ENCODE measurements at regions of chr12 and their contacts with region 1.

Region 1: DNA sequence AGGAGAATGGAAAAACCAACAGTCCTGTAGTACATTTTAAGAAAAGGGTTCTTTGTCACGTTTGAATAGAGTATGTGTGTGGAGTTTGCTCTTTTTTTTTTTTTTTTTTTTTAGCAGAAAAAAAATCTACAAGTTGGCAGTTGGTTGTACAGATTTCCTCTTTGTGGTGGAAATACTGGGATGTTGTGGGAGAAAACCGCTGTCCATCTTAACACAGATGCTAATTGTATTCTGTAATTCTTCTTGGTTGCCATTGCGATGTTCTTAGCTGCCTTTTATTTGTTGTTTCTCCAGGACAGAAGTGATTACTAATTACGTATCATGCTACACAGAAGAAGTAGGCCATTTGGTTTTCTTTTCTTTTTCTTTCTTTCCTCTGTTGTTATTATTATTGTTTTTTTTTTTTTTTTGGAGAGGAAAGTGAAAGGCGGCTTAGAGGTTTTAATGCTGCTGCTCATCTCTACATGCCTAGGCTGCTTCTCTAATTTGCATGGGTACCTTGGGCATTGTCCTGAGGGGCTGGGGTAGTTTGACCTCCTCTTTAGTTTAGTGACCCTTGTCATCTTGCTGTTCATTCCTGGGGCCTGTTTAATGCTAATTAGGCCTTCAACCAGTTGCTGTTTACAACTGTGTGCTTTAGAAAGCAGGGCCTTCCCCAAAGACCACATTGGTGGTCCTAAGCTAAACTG is 94.7 kb downstream of the TMTC2 start:
- DNase-seq: no peak
- ATAC-seq: no peak
- H3K4me3 ChIP-seq: no peak overlapping the region
- H3K4me3 Mint-ChIP-seq: no peak overlapping the region
- H3K27ac ChIP-seq: no peak overlapping the region
- H3K27ac Mint-ChIP-seq: no peak overlapping the region
- H3K4me1 ChIP-seq: no peaks in the 10 kb centered on the region
- H3K4me1 Mint-ChIP-seq: no peaks in the 10 kb centered on the region
- H3K27me3 ChIP-seq: no peaks in the 10 kb centered on the region
- H3K27me3 Mint-ChIP-seq: no peaks in the 10 kb centered on the region

Region 2: DNA sequence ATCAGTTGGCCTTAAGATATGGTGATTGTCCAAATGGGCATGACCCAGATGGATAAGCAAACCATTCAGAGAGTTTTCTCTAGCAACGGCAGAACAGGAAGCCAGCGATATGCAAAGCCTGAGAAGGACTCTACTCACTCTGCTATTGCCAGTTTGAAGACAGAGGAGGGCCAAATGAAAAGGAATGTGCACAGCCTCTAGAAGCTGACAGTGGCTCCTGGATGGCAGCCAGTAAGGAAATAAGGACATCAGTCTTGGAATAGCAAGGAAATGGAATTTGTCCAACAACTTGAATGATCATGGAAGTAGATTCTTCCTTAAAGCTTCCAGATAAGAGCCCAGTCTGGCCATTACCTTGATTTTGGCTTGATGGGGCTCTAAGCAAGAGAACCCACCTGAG is 34.8 kb before region 1 on chr12:
- CTCF ChIA-PET with region 1: interaction called in 1 of 2 experiments, 3 read pairs
- POLR2A ChIA-PET with region 1: interaction called in 1 of 2 experiments, 11 read pairs
- DNase-seq: no peak
- ATAC-seq: no peak
- H3K4me3 ChIP-seq: no peak overlapping the region
- H3K4me3 Mint-ChIP-seq: no peak overlapping the region
- H3K27ac ChIP-seq: no peak overlapping the region
- H3K27ac Mint-ChIP-seq: no peak overlapping the region
- H3K4me1 ChIP-seq: no peaks in the 10 kb centered on the region
- H3K4me1 Mint-ChIP-seq: no peaks in the 10 kb centered on the region
- H3K27me3 ChIP-seq: no peaks in the 10 kb centered on the region
- H3K27me3 Mint-ChIP-seq: no peaks in the 10 kb centered on the region

Region 3: GRCh38 chr12:82793751-82794281 is 12.4 kb after region 1 on chr12:
- CTCF ChIA-PET with region 1: interaction called in 1 of 2 experiments, 3 read pairs
- POLR2A ChIA-PET with region 1: interaction called in 1 of 2 experiments, 10 read pairs
- DNase-seq: no peak
- ATAC-seq: no peak
- H3K4me3 ChIP-seq: no peak overlapping the region
- H3K4me3 Mint-ChIP-seq: no peak overlapping the region
- H3K27ac ChIP-seq: no peak overlapping the region
- H3K27ac Mint-ChIP-seq: no peak overlapping the region
- H3K4me1 ChIP-seq: no peaks in the 10 kb centered on the region
- H3K4me1 Mint-ChIP-seq: no peaks in the 10 kb centered on the region
- H3K27me3 ChIP-seq: no peaks in the 10 kb centered on the region
- H3K27me3 Mint-ChIP-seq: no peaks in the 10 kb centered on the region

Measured in T-cell (primary cell).